Motor neuron (in vitro differentiated cells): ENCODE measurements at regions of chr6 and their contacts with region 1.

Region 1: GRCh38 chr6:161079566-161080262 is 88.1 kb downstream of the MAP3K4 start:
- ATAC-seq: peak in 1 of 8 experiments; percentile 36
- H3K4me3 ChIP-seq: no peak overlapping the region
- H3K27ac ChIP-seq: no peak overlapping the region
- H3K4me1 ChIP-seq: no peaks in the 10 kb centered on the region

Region 2: DNA sequence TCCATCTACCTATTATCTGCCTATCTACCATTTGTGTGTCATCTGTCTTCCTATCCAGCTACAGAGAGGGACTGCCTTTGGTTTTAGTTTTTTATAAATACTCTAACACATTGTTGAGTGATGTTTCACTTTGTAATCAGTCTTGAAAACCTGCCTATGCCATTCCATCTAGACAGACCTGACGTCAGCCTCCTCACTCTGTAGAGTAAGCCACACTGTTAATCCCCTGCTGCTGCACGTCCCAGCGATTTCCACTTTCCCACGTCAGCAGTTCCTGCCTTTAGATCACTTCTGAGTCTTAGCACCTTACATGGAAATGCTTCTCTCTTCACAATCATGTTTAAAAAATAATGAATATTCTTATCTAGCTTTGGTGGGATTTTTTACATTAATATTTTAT is 322.8 kb before region 1 on chr6:
- in situ Hi-C with region 1: no loop called
- ATAC-seq: no peak
- H3K4me3 ChIP-seq: no peak overlapping the region
- H3K27ac ChIP-seq: no peak overlapping the region
- H3K4me1 ChIP-seq: no peaks in the 10 kb centered on the region

Region 3: DNA sequence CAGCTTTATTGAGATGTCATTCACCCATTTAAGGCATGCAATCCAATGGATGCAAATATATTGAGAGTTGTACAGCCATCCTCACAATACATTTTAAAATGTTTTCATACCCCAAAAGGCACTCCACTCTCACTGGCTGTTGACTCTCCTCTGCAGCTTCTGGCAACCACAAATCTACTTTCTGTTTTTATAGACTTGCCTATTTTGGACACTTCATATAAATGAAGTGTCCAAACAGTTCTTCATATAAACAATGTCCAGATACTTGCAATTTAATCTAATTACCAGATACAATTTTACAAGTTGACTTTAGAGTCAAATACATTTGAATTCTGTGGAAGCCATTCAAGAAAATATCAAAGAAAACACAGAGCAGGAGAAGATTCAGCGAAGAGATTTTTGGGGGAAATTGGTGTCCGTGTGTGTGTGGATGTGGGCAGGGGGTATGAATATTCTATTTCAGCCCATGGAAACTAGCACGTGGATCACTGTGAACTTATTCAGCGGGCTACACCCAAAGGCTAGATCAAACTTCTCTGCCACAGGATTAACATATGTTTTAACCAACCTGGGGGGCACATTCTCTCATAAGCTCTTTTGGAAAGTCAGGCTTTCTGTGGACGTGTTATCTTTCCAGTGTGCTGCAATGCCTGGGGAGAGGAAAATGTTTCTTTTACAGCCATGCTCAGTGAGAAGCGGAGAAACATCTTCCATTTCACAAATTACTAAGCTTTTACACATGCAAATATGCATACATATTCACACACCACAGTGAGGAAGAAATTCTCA is 303.7 kb before region 1 on chr6:
- in situ Hi-C with region 1: no loop called
- ATAC-seq: peak in 3 of 8 experiments; percentile 88 to 94 (median 91)
- H3K4me3 ChIP-seq: no peak overlapping the region
- H3K27ac ChIP-seq: no peak overlapping the region
- H3K4me1 ChIP-seq: no peaks in the 10 kb centered on the region

Region 4: DNA sequence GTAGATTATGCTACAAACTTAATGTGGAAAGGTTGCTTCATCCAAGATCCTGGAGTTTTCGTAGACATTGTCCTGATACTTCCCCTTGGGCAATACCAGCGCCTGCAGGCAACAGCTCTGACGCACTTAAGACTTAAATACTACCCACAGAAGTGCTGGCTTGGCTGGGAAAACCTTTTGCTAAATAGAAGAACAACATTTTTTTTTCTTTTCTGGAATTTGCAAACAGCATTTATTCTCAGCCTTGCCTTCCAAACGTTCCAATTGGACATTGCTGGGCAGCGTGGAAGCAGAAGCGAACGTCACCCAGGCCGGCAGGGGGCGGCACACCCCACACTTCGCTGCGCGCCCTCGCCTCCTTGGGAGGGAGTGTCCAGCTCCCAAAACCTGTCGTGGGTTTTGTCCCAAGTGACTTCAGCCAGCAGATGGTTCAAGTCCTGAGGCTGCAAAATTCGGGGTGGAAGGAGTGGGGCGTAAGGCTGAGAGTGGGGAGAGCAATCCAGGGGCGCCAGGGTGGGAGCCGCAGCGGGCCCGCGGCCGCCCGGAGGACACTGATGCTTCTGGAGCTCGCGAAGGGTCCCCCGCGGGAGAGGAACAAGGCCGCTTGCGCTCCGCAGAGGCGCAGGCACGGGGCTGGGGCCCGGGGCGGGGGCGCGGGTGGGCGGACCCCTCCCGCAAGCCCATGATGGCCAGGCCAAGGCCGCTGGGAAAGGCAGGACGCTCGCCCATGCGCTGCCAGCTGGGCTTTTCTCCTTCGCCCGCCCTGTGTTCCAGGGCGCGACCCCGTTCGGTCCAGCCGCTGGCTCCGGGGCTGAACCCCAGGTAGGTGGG is 149.0 kb before region 1 on chr6:
- in situ Hi-C with region 1: loop called in 1 of 9 experiments (anchors 25 kb)
- ATAC-seq: peak; percentile 96 to 99 (median 97)
- H3K4me3 ChIP-seq: peak overlapping the region; percentile 45 to 72 (median 47)
- H3K27ac ChIP-seq: no peak overlapping the region
- H3K4me1 ChIP-seq: peaks cover 0 to 7% of the 10 kb centered on the region in 2 donors

Region 5: GRCh38 chr6:162109480-162110050 is 1029.9 kb after region 1 on chr6:
- in situ Hi-C with region 1: no loop called
- ATAC-seq: no peak
- H3K4me3 ChIP-seq: no peak overlapping the region
- H3K27ac ChIP-seq: no peak overlapping the region
- H3K4me1 ChIP-seq: peaks cover 0 to 5% of the 10 kb centered on the region in 2 donors